ENCODE measurements at regions of chrX and their contacts with region 1.

Region 1: DNA sequence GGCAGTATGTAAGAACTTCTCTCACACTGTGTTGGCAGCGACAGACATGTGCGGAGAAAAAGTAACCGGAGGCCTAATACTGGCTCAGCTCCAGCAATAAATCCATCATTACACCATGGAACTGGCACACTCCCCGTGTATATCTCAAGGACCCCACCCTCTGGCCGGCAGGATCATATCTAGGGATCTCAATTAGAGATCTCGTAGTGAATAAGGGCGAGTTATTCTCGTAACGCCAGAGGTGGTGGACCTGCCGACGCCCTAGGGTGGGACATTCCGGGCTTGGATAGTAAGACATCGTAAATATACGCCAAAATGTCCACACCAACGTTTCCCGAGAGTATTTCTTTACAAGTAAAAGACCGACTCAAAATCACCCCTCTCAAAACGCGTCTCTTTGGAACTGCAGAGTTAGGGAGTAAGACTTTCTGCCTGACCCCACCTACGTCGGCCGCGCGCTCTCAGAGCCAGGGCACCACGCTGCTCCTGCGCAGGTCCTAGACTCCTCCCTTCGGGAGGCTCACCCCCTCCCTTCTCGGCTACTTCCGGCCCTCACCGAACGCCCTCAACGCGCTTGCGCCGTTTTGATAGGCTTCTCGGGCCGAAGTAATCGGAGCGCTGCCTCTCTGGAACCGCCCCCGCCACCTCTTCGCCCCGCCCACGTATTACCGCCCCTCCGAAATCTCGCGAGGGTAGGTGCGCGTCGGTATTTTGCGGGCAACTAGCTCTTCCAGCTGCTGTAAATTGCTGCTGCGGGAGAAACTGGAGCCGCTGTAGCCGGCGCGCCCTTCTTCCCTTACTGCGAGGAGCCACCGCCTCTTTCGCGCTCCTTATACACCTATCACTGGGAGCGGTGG is at the start of gene WDR44:
- DNase-seq: peak; percentile 95
- ATAC-seq: peak; percentile 93
- H3K4me3 Mint-ChIP-seq: peak within 1 kb of the TSS; percentile 96
- H3K27ac Mint-ChIP-seq: peak within 1 kb of the TSS; percentile 95
- H3K4me1 Mint-ChIP-seq: peaks cover 27% of the 10 kb centered on the region
- H3K27me3 Mint-ChIP-seq: no peaks in the 10 kb centered on the region
- total RNA-seq, gene WDR44: 8.9 to 9.3 TPM

Region 2: DNA sequence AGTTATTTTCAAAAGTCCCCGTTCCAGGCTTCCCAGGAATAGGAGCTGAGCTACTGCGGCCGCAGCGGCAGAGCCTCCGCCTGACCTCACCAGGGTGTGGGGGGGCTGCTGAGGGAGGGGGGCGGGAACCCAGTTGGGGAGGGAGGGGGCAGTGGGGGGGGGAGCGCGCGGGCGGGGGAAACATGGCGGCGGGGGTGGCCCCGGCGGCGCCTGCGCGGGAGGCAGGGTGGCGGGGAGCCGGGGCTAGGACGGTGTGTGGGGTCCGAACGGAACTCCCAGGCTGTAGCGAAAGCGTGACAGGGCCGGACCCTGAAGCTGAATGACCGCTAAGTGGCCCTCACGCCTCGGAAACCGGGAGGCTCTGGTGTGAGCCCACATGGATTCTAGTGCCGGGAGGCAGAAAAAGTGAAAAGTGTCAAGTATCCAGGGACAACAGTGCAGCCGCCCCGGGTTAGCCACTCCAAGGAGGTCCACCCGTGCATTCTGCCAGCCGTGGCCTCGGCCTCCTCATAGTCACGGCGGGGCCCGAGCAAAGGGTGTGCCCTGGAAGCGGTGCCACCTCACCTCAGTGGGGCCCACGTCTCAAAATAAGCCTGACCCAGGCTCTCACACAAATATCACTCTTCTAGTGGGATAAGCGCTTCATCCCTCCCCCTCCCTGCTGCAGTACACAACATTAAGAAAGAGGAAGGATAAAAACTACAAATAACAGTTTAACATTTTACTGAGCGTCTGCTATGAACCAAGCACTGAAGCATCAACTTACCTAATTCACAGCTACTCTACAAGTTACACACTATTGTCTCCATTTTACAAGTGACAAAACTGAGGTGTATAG is 228.7 kb before region 1 on chrX and contains the start of gene KLHL13:
- CTCF ChIA-PET with region 1: no interaction called
- POLR2A ChIA-PET with region 1: no interaction called
- intact Hi-C with region 1: loop called in 1 of 2 experiments (anchors 5 kb)
- DNase-seq: peak; percentile 40
- ATAC-seq: peak; percentile 57
- H3K4me3 Mint-ChIP-seq: peak within 1 kb of the TSS; percentile 73
- H3K27ac Mint-ChIP-seq: peak within 1 kb of the TSS; percentile 65
- H3K4me1 Mint-ChIP-seq: peaks cover 8% of the 10 kb centered on the region
- H3K27me3 Mint-ChIP-seq: peaks cover 10% of the 10 kb centered on the region
- total RNA-seq, gene KLHL13: 2.0 to 3.5 TPM

Region 3: DNA sequence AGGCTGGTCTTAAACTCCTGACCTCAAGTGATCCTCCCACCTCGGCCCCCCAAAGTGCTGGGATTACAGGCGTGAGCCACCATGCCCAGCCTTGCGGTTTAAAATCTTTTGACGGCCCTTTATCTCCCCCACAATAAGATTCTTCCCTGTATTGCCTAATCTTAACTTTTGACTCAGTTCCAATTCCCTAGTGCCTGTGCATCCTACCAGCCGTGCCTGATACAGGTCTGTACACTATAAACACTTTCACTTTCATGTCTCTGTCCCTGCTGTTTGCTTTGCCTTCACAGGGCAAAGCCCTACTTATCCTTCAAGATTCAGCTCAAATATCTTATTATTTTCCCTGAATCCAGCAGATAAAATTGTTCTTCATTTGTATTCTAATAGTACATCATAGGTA is 74.8 kb after region 1 on chrX:
- CTCF ChIA-PET with region 1: no interaction called
- POLR2A ChIA-PET with region 1: no interaction called
- intact Hi-C with region 1: loop called (anchors 5 to 10 kb)
- DNase-seq: peak; percentile 6
- ATAC-seq: peak; percentile 57
- H3K4me3 Mint-ChIP-seq: no peak overlapping the region
- H3K27ac Mint-ChIP-seq: peak overlapping the region; percentile 37
- H3K4me1 Mint-ChIP-seq: peaks cover 18% of the 10 kb centered on the region
- H3K27me3 Mint-ChIP-seq: no peaks in the 10 kb centered on the region

Region 4: GRCh38 chrX:118528071-118528737 is 182.6 kb after region 1 on chrX:
- CTCF ChIA-PET with region 1: no interaction called
- POLR2A ChIA-PET with region 1: no interaction called
- intact Hi-C with region 1: loop called in 1 of 2 experiments (anchors 5 kb)
- DNase-seq: peak; percentile 74
- ATAC-seq: peak; percentile 67
- H3K4me3 Mint-ChIP-seq: peak overlapping the region; percentile 85
- H3K27ac Mint-ChIP-seq: peak overlapping the region; percentile 100
- H3K4me1 Mint-ChIP-seq: peaks cover 78% of the 10 kb centered on the region
- H3K27me3 Mint-ChIP-seq: no peaks in the 10 kb centered on the region

Region 5: DNA sequence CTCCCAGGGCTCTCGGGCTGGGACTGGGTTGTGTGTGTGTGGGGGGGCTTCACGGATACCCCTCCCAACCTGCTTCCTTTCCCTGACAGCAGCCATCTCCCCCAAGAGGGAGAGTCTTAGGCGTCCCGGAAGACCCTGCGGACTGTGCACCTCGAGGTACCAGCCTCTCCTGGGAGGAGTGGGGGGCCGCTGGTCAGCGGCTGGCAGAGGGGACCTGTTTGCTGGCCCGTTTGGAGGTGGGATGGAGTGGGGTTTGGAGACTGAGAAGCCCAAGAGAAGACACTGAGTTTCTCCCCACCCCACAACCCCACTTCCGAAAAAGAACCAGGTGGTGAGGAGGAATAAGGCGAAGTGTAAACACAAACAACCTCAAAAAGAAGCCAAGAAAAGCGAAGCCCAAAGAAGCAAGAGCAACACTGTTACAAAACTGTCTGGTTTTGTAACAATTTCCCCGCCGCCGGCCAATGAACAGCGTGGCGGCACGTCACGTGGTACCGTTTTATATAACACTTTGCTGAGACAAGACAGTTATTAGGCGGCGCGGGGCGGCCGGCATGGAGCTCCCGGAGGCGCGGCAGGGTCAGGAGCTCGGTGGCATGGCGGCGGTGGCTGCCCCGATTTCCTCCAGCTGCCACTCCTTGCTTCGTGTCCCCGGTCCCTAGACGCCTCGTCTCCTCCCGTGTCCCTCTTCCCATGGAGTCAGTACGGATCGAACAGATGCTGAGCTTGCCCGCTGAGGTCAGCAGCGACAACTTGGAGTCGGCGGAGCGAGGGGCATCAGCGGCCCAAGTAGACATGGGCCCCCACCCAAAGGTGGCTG is 628.7 kb after region 1 on chrX and contains the start of gene LONRF3:
- CTCF ChIA-PET with region 1: no interaction called
- POLR2A ChIA-PET with region 1: no interaction called
- intact Hi-C with region 1: loop called in 1 of 2 experiments (anchors 10 kb)
- DNase-seq: peak; percentile 70
- ATAC-seq: peak; percentile 47
- H3K4me3 Mint-ChIP-seq: peak within 1 kb of the TSS; percentile 85
- H3K27ac Mint-ChIP-seq: peak within 1 kb of the TSS; percentile 93
- H3K4me1 Mint-ChIP-seq: peaks cover 8% of the 10 kb centered on the region
- H3K27me3 Mint-ChIP-seq: peaks cover 12% of the 10 kb centered on the region
- total RNA-seq, gene LONRF3: 1.7 to 1.9 TPM

Measured in activated CD4-positive, alpha-beta T cell treated with anti-CD3 and anti-CD28 coated beads for 36 hours (primary cell).